ENCODE measurements at regions of chr1 and their contacts with region 1.

Region 1: DNA sequence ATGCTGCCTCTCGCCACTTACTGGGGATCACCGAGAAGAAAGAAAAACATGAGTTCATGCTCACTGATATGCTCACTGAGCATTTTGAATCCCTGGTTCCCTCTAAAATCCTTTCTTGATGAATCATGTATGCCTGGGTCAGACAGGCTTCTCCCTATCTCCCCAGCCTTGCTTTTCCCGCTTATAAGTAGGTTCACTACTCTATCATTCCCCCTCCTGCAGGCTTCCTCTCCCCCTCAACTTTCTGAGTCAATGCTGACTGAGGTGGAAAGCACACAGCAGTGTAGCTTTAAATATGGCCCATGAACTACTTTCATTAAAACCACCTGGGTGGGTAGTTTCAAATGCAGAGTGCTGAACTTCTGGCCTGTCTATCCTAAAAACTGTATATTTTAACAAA is 41.7 kb downstream of the FMO4 start:
- DNase-seq: no peak
- H3K4me3 ChIP-seq: no peak overlapping the region
- H3K27ac ChIP-seq: no peak overlapping the region
- H3K4me1 ChIP-seq: no peaks in the 10 kb centered on the region
- H3K27me3 ChIP-seq: peaks cover 2% of the 10 kb centered on the region
- CTCF ChIP-seq: no peak

Region 2: DNA sequence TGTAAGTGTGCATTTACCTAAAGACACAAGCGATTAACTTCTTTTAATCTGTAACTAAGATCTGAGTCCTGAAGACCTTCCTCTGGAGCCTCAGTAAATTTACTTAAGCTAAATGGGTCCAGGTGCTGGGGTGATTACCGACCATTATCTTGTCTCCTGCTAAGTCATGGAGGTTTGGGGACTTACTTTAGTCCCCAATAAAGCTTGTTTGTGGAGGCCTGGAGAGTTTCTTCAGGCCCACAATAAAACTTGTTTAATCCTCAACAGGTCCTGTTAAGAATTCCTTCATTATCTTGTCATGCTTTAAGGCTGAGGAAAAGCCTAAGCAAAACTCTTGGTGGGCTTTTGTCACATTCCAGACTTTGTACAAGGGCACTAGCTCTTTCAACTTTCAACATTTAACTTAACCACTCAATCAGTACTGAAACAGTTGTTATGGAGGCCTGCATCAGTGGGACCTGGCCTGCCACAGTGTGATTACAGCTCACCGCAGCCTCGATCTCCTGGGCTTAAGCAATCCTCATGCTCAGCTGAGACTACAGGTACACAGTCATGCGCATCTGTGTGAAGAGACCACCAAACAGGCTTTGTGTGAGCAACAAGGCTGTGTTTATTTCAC is 42.2 kb after region 1 on chr1:
- CTCF ChIA-PET with region 1: no interaction called
- dilution Hi-C with region 1: loop called (anchors 5 kb)
- in situ Hi-C with region 1: no loop called
- intact Hi-C with region 1: no loop called
- DNase-seq: no peak
- H3K4me3 ChIP-seq: no peak overlapping the region
- H3K27ac ChIP-seq: no peak overlapping the region
- H3K4me1 ChIP-seq: peaks cover 1% of the 10 kb centered on the region
- H3K27me3 ChIP-seq: no peaks in the 10 kb centered on the region
- CTCF ChIP-seq: no peak